Activated T-helper 2 cell treated with anti-CD3 and anti-CD28 coated beads, Interferon-gamma antibody, Interleukin-2, Interleukin-4, amounts not matched to agents 10 μg/mL and 5 μg/mL and 100 μg/mL, durations not matched to agents 14 hours and 24 hours and 36 hours (primary cell): ENCODE measurements at regions of chr20 and their contacts with region 1.

Region 1: GRCh38 chr20:4720041-4720976 is 1.4 kb upstream of the PRND start:
- DNase-seq: peak; percentile 67
- H3K4me3 Mint-ChIP-seq: no peak overlapping the region
- H3K27ac Mint-ChIP-seq: no peak overlapping the region
- H3K4me1 Mint-ChIP-seq: peaks cover 10% of the 10 kb centered on the region
- H3K27me3 Mint-ChIP-seq: peaks cover 11% of the 10 kb centered on the region

Region 2: GRCh38 chr20:4592316-4593148 is 127.8 kb before region 1 on chr20:
- intact Hi-C with region 1: no loop called
- DNase-seq: peak; percentile 42
- H3K4me3 Mint-ChIP-seq: peak overlapping the region; percentile 56
- H3K27ac Mint-ChIP-seq: no peak overlapping the region
- H3K4me1 Mint-ChIP-seq: peaks cover 5% of the 10 kb centered on the region
- H3K27me3 Mint-ChIP-seq: peaks cover 33% of the 10 kb centered on the region

Region 3: GRCh38 chr20:4607287-4607713 is 113.0 kb before region 1 on chr20:
- intact Hi-C with region 1: loop called (anchors 1 kb)
- DNase-seq: peak; percentile 41
- H3K4me3 Mint-ChIP-seq: no peak overlapping the region
- H3K27ac Mint-ChIP-seq: no peak overlapping the region
- H3K4me1 Mint-ChIP-seq: peaks cover 2% of the 10 kb centered on the region
- H3K27me3 Mint-ChIP-seq: peaks cover 22% of the 10 kb centered on the region

Region 4: GRCh38 chr20:4613718-4614620 is 106.3 kb before region 1 on chr20:
- intact Hi-C with region 1: loop called (anchors 1 kb)
- DNase-seq: peak; percentile 52
- H3K4me3 Mint-ChIP-seq: no peak overlapping the region
- H3K27ac Mint-ChIP-seq: no peak overlapping the region
- H3K4me1 Mint-ChIP-seq: peaks cover 6% of the 10 kb centered on the region
- H3K27me3 Mint-ChIP-seq: peaks cover 7% of the 10 kb centered on the region

Region 5: DNA sequence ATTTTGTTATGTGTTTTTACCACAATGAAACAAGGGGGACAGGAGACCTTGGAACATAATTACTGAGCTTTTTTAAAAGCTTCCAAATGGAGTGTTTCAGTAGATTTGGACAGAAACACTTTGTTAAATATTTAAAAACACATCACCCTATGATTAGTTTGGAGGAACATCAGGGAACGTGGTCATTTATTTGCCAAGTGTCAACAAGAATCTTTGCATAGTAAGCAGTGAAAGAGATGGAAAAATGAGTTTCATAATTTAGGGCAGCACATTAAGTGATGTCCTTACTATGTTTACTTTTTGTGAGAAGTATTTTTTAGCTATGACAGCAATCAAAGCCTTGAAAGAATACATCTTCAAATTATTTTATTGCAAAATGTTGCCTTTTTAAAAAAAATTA is 513.8 kb after region 1 on chr20:
- intact Hi-C with region 1: no loop called
- DNase-seq: no peak
- H3K4me3 Mint-ChIP-seq: no peak overlapping the region
- H3K27ac Mint-ChIP-seq: no peak overlapping the region
- H3K4me1 Mint-ChIP-seq: peaks cover 2% of the 10 kb centered on the region
- H3K27me3 Mint-ChIP-seq: peaks cover 35% of the 10 kb centered on the region